Activated CD4-positive, alpha-beta memory T cell treated with anti-CD3 and anti-CD28 coated beads, Interleukin-2, amount 10 ng/mL, durations not matched to agents 7 days and 5 days (primary cell): ENCODE measurements at regions of chr12 and their contacts with region 1.

Region 1: GRCh38 chr12:120469450-120470149 is at the start of gene SRSF9:
- DNase-seq: peak; percentile 97
- H3K4me3 Mint-ChIP-seq: peak within 1 kb of the TSS; percentile 93
- H3K27ac Mint-ChIP-seq: peak within 1 kb of the TSS; percentile 84
- H3K4me1 Mint-ChIP-seq: peaks cover 47% of the 10 kb centered on the region
- H3K27me3 Mint-ChIP-seq: peaks cover 2% of the 10 kb centered on the region
- total RNA-seq, gene SRSF9: 175 to 180 TPM

Region 2: GRCh38 chr12:120394483-120395367 is 74.9 kb before region 1 on chr12:
- CTCF ChIA-PET with region 1: no interaction called
- POLR2A ChIA-PET with region 1: no interaction called
- DNase-seq: no peak
- H3K4me3 Mint-ChIP-seq: no peak overlapping the region
- H3K27ac Mint-ChIP-seq: no peak overlapping the region
- H3K4me1 Mint-ChIP-seq: peaks cover 2% of the 10 kb centered on the region
- H3K27me3 Mint-ChIP-seq: peaks cover 24% of the 10 kb centered on the region

Region 3: GRCh38 chr12:120437754-120438494 is 31.7 kb before region 1 on chr12 and contains the start of gene COX6A1:
- CTCF ChIA-PET with region 1: interaction called, 21 read pairs
- POLR2A ChIA-PET with region 1: interaction called, 17 read pairs
- DNase-seq: peak; percentile 98
- H3K4me3 Mint-ChIP-seq: peak within 1 kb of the TSS; percentile 91
- H3K27ac Mint-ChIP-seq: peak within 1 kb of the TSS; percentile 95
- H3K4me1 Mint-ChIP-seq: peaks cover 31% of the 10 kb centered on the region
- H3K27me3 Mint-ChIP-seq: peaks cover 2% of the 10 kb centered on the region
- total RNA-seq, gene COX6A1: 318 to 323 TPM

Region 4: GRCh38 chr12:120453977-120454376 is 15.6 kb before region 1 on chr12:
- CTCF ChIA-PET with region 1: interaction called, 33 read pairs
- POLR2A ChIA-PET with region 1: interaction called, 9 read pairs
- DNase-seq: no peak
- H3K4me3 Mint-ChIP-seq: no peak overlapping the region
- H3K27ac Mint-ChIP-seq: no peak overlapping the region
- H3K4me1 Mint-ChIP-seq: peaks cover 10% of the 10 kb centered on the region
- H3K27me3 Mint-ChIP-seq: no peaks in the 10 kb centered on the region

Region 5: GRCh38 chr12:120495723-120496412 is 26.3 kb after region 1 on chr12 and contains the start of gene DYNLL1:
- CTCF ChIA-PET with region 1: interaction called, 13 read pairs
- POLR2A ChIA-PET with region 1: interaction called, 27 read pairs
- DNase-seq: peak; percentile 97
- H3K4me3 Mint-ChIP-seq: peak within 1 kb of the TSS; percentile 88
- H3K27ac Mint-ChIP-seq: peak within 1 kb of the TSS; percentile 69
- H3K4me1 Mint-ChIP-seq: peaks cover 38% of the 10 kb centered on the region
- H3K27me3 Mint-ChIP-seq: no peaks in the 10 kb centered on the region
- total RNA-seq, gene DYNLL1: 209 to 216 TPM

Region 6: DNA sequence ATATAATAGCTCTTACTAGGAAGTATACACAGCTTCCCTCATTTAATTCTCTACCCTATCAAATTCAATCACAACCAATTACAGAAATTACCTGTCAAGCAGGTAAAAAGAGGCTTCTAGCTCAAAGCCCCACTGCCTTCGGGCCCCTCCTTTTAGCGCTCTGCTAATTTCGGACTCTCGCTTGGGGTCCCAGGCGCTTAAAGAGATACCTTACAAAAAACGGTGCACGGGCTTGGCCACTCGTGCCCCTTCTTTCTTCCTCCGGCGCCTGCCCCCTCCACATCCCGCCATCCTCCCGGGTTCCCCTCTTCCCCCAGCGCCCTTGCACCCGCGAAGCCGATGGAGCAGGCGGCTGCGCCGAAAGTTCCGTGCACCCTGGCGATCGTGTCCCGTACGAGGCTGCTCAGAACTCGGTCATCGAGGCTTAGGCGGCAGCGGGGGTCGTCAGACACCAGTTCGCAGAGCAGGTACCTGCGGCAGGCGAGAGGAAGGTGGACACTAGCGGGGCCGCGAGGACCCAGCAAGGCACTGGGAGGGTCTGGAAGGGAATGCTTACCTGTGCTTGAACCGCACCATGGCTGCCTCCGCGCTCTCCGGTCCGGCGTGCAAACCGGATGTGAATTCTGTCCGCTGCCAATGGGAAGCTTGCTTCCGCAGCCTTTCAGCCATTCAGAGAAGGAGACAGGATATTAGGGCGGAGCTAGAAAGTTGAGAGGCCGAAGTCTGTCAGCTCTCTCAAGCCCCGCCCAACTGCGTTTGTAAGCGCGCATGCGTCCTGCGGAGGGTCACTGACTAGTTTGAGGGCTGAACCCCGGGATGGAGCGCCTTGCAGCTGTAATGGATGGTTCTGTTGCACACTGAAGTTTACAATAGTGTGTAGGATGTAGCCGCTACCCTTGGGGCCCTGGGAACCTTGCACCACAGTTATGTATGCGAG is 111.5 kb after region 1 on chr12 and contains the start of gene POP5:
- CTCF ChIA-PET with region 1: interaction called, 17 read pairs
- POLR2A ChIA-PET with region 1: interaction called, 11 read pairs
- DNase-seq: peak; percentile 95
- H3K4me3 Mint-ChIP-seq: peak within 1 kb of the TSS; percentile 94
- H3K27ac Mint-ChIP-seq: peak within 1 kb of the TSS; percentile 78
- H3K4me1 Mint-ChIP-seq: peaks cover 42% of the 10 kb centered on the region
- H3K27me3 Mint-ChIP-seq: peaks cover 13% of the 10 kb centered on the region
- total RNA-seq, gene POP5: 37.6 to 38.8 TPM